ENCODE measurements at regions of chr9 and their contacts with region 1.

Region 1: DNA sequence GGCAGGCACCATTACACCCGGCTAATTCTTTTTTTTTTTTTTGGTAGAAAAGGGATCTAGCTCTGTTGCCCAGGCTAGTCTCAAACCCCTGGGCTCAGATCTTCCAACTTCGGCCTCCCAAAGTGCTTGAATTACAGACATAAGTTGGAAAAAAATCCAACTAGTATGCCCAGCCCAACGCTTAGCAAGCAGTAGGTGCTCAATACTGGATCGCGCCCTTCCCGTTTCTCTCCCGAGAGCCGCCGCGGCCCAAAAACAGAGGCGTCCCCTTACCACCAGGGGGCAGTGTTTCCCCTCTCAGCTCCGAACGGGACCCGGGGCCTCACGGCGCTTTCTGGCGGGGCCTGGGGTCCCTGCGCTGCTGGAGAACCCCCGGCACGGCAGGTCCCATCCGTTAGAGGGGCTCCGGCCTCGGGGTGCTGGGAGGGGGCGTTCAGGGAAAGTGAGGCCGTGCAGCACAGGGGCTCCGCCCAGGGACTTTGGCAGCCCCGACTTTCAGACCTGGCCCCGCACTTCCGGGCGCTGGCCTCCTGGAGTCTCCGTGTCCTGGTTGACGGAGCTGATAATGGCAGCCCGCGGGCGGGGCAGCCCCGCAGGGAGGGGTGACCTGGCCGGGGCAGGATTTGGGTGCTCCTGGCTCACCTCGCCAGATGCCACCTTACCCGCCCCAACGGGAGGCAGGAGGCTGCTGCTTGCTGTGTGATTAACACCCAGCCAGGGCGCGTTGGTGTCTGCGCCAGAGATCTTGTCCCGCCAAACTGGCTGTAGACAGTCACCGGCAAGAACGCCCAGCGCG is 15.2 kb downstream of the PTGES start:
- DNase-seq: peak; percentile 22
- H3K4me3 ChIP-seq: peak overlapping the region; percentile 33 to 80 (median 54)
- H3K27ac ChIP-seq: peak overlapping the region; percentile 74 to 87 (median 82)
- H3K4me1 ChIP-seq: peaks cover 3 to 17% (median 6%) of the 10 kb centered on the region in 3 donors
- H3K27me3 ChIP-seq: peaks cover 0 to 27% (median 0%) of the 10 kb centered on the region in 4 donors
- CTCF ChIP-seq: peak; percentile 96 to 99 (median 98)
- POLR2A ChIP-seq: no peak

Region 2: DNA sequence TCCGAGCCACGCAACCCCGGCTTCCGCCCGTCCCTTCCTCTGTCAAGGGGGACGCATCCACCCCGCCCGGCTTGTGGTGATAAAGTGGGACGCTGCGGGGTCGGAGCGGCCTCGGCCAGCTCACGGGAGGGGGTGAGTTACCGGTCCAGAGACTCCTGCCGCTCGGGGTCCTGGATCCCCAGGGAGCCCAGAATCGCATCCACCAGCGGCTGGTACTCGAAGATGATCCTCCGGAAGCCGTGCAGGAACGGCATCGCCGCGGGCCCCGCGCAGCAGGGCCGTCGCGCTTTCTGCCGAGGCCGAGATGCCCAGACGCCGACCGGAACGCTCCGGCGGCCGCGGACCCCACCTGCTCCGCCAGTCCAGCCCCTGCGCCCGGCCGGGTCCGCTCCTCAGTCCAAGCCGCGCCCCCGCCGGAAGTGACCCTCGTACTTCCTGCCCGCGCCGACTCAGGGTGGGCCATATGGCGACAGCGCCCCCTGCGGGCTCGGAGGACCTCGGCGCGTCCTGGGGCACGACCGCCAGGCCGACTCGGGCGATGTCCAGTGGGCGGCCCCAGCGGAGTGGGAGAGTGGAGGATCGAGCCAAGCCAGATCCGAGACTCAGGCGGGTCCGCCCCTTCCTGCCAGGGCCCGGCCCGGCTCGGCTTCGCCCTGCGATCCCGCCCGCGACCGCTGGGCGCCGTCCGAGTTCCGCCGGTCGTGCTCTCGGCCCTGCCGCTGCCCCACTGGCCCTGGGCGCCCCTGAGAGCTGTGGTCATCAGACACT is 95.7 kb before region 1 on chr9 and contains the start of gene ASB6:
- intact Hi-C with region 1: loop called (anchors 10 kb)
- DNase-seq: peak; percentile 65
- H3K4me3 ChIP-seq: peak within 1 kb of the TSS; percentile 88 to 99 (median 94)
- H3K27ac ChIP-seq: peak within 1 kb of the TSS; percentile 80 to 93 (median 88)
- H3K4me1 ChIP-seq: peaks cover 18 to 71% (median 43%) of the 10 kb centered on the region in 3 donors
- H3K27me3 ChIP-seq: no peaks in the 10 kb centered on the region
- CTCF ChIP-seq: peak; percentile 98 to 100 (median 100)
- POLR2A ChIP-seq: peak in 3 of 4 donors; percentile 33 to 81 (median 78)
- total RNA-seq, gene ASB6: 15.4 to 22.5 (median 17.6) TPM